ENCODE measurements at regions of chr10 and their contacts with region 1.

Region 1: DNA sequence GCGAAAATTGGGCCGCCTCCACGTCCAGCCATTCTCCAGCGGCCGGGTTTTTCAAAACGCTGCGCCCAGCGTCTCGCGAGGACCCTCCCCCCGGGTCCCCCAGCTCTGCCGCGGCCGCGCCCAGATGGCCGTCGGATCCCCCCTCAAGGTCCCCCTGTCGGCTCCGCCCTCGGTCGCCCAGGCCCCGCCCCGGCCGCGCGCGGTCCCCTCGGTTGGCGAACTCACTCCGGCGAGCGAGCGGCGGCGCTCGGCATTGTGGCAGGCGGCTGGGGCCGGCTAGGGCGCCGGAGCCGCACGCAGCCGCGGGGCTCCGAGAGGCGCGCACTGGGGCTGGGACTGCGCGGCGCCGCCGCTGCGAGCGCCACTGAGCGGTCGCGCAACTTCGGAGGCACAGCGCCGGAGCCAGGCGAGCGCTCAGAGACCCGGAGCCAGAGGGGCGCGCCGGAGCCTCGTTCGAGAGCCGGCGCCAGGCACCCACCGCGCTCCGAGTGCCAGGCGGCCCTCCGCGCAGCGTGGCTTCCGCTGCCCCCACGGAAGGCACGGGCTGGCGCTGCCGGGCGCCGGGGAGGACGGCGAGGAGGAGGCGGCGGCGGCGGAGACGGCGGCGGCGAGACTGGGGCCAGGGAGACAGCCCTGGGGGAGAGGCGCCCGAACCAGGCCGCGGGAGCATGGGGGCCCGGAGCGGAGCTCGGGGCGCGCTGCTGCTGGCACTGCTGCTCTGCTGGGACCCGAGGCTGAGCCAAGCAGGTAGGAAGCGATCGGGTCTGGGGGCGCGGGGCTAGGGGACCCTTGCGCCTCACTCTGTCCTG is at the start of gene UNC5B:
- DNase-seq: no peak
- H3K4me3 ChIP-seq: peak within 1 kb of the TSS; percentile 73
- CTCF ChIP-seq: peak; percentile 41

Region 2: DNA sequence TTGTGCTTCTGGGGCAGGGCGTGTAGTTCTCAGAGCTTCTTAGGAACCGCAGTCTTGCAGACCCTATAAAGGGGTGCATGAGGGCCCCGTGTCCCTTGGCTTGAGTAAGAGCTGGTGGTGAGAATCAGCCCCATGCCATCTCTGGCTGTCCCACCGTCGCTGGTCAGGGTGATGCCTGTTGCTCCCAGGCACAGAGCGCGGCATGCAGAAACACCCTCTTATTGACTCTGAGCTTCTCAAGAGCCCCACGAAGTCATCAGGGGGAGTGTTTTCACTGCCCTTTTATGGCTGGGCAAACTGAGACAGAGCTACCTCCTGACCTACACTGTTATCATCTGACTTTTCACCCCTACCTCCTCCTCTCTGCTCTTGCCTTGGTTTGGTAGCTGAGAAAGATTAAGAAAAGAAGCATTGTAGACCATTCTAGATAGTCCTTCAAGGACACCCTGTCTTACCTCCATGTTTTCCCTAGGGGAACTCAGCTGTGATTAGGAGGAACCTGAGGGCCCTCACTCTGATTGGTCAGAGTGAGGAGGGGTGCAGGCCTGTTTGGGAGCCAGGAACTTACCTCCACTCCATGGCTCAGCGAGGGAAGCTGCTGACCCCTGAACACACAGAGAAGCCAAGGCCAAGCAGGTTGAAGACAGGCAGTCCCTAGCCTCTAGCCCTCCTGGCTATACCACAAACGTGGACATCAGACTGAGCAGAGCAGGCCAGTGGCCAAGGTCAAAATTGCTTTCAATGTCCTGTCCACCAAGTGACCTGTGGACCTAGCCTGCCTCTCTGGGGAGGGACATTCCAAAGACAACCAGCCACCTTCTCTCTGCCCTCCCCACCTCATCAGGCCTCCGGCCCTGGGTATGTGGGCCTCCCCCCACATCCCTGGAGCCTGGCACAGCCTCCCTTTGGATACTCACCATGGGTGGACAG is 17.5 kb after region 1 on chr10:
- CTCF ChIA-PET with region 1: interaction called, 12 read pairs
- POLR2A ChIA-PET with region 1: interaction called, 3 read pairs
- DNase-seq: no peak
- H3K4me3 ChIP-seq: no peak overlapping the region
- CTCF ChIP-seq: no peak

Region 3: GRCh38 chr10:71244431-71245419 is 32.2 kb after region 1 on chr10:
- CTCF ChIA-PET with region 1: interaction called, 10 read pairs
- POLR2A ChIA-PET with region 1: interaction called, 5 read pairs
- DNase-seq: no peak
- H3K4me3 ChIP-seq: peak overlapping the region; percentile 36
- CTCF ChIP-seq: no peak

Region 4: DNA sequence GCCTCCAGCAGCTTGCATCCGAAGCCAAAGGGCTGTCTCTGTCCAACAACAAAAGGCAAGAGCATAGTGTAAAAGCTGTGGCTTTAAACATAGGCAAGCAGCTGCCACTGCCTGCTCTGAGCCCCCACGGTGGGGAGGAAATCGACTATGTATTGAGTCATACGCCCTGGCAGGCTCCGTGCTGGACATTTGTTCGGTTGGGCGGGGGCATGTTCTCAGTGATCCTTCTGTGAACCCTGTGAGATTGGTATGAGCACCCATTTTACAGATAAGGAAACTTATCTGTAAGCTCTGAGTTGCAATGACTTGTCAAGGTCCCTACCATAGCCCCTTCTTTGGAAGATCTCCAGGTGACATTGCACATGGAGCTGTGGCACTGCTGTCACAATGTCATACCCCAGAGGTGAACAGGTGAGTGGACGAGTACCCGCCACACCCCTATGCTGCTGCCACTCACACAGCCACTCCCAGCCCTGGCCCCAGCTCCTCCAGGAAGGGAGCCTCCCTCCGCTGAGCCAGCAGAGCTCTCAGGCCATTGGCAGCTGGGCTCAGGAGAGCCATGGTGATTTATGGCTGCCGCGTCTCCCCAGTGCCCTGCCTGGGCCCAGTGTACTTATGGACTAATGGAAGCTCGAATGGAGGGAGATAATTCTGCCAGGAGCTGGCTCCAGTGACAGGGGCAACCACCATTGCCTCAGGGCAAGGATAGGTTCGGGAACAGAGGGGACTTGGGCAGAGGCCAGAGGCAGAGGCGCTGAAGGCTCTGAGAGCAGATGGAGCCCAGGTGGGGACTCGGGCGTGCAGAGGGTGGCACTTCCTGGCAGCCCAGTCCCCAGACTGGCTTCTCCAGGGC is 43.5 kb after region 1 on chr10:
- CTCF ChIA-PET with region 1: interaction called, 4 read pairs
- POLR2A ChIA-PET with region 1: interaction called, 10 read pairs
- DNase-seq: no peak
- H3K4me3 ChIP-seq: no peak overlapping the region
- CTCF ChIP-seq: no peak

Region 5: DNA sequence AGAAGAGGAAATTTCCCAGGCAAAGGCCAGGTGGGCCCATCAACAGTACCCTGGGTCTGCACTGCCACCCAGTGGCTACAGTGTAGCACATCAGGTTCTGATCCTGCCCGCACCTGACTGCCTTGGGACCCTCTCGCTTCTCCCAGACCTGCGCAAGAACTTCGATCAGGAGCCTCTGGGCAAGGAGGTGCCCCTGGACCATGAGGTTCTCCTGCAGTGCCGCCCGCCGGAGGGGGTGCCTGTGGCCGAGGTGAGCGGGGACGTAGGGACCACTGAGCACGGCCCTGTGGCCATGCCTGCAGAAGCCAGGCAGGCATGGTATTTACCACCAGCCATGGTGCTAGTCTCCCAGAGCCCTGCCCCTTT is 72.6 kb after region 1 on chr10:
- CTCF ChIA-PET with region 1: interaction called, 17 read pairs
- POLR2A ChIA-PET with region 1: no interaction called
- DNase-seq: no peak
- H3K4me3 ChIP-seq: no peak overlapping the region
- CTCF ChIP-seq: peak; percentile 77